ENCODE measurements at regions of chr16 and their contacts with region 1.

Region 1: GRCh38 chr16:75471723-75472633 is 7.5 kb upstream of the TMEM170A start:
- DNase-seq: peak; percentile 58
- H3K4me3 ChIP-seq: no peak overlapping the region
- H3K27ac ChIP-seq: no peak overlapping the region
- H3K4me1 ChIP-seq: no peaks in the 10 kb centered on the region
- CTCF ChIP-seq: peak; percentile 88

Region 2: GRCh38 chr16:75491876-75492275 is 19.9 kb after region 1 on chr16:
- CTCF ChIA-PET with region 1: no interaction called
- POLR2A ChIA-PET with region 1: interaction called, 4 read pairs
- intact Hi-C with region 1: loop called (anchors 2 kb)
- DNase-seq: peak; percentile 16
- H3K4me3 ChIP-seq: no peak overlapping the region
- H3K27ac ChIP-seq: no peak overlapping the region
- H3K4me1 ChIP-seq: no peaks in the 10 kb centered on the region
- CTCF ChIP-seq: peak; percentile 45

Region 3: DNA sequence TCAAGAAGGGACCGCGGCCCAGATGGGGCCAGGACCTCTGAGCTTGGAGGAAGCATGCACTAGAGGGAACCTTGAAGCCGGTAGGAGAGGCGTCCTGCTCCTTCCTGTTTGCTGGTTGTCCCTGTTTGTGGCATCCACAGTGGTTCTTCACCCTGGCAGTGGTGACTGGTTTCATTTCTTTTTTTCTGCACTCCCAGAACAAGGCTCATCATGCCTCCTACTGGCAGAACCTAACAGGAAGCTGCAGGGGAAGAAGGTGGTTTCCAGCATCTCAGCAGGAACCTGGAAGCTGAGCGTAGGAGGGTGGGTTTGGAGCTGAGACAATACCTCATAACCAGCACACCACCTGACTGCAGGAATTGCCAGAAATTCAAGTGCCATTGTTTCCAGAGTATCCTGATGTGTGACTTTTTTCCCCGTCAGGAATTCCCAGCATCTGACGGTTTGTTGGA is 78.3 kb after region 1 on chr16:
- CTCF ChIA-PET with region 1: no interaction called
- POLR2A ChIA-PET with region 1: interaction called, 3 read pairs
- intact Hi-C with region 1: loop called (anchors 2 kb)
- DNase-seq: peak; percentile 54
- H3K4me3 ChIP-seq: no peak overlapping the region
- H3K27ac ChIP-seq: no peak overlapping the region
- H3K4me1 ChIP-seq: peaks cover 15% of the 10 kb centered on the region
- CTCF ChIP-seq: peak; percentile 71

Region 4: DNA sequence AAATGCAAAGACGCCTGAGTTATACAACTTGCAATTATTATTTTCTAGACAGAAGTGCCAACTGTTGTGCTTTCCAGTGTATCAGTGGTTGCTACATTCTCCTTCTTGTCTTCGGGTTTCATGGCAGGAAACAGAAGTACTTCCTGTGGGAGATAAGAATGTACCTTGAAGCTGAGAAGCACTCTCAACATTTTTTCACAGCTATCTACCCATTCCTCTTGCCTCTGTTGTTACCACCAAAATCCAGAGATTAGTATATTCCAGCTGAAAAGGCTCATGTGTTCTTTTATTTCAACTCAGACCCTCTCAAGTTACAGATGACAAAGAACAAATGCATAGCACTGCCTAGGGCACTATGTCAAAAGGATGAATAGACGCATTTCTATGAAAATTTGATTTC is 155.9 kb after region 1 on chr16:
- CTCF ChIA-PET with region 1: no interaction called
- POLR2A ChIA-PET with region 1: no interaction called
- intact Hi-C with region 1: no loop called
- DNase-seq: no peak
- H3K4me3 ChIP-seq: no peak overlapping the region
- H3K27ac ChIP-seq: no peak overlapping the region
- H3K4me1 ChIP-seq: peaks cover 5% of the 10 kb centered on the region
- CTCF ChIP-seq: no peak